Activated naive CD4-positive, alpha-beta T cell treated with anti-CD3 and anti-CD28 coated beads for 36 hours (primary cell): ENCODE measurements at regions of chr9 and their contacts with region 1.

Region 1: DNA sequence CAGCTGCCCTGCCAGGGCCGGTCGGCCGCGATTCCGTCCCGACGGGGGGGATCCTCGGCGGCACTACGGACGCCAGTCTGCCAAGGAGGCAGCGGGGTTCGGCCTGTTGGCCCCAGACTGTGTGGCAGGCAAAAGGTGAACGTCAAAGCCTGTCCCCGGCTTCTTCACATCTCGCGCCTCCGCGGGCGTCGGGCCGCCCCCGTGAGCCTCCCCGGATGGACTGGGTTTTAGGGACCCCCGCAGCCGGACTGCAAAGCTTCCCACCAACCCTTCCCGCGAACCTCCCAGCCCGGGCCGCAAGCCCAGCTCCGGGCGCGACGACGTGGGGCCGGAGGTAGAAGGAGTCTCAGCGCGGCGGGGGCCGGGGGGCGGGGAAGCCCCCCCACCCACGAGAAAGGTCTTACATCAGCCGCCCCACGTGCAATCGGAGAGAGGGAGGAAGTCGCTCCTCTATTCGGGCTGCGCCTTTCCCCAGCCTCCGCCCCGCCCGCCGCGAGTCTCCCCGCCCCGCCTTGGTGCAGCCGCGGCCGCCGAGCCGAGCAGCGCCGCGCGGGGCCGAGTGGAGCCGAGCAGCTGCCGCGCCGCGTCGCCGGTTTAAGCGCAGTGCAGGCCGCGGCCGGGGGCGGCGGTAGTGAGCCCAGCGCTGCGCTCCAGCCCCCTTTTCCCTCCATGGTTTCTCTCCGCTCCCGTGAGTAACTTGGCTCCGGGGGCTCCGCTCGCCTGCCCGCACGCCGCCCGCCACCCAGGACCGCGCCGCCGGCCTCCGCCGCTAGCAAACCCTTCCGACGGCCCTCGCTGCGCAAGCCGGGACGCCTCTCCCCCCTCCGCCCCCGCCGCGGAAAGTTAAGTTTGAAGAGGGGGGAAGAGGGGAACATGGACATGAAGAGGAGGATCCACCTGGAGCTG is at the start of gene ANP32B:
- DNase-seq: peak; percentile 96
- H3K4me3 Mint-ChIP-seq: peak within 1 kb of the TSS; percentile 82
- H3K27ac Mint-ChIP-seq: peak within 1 kb of the TSS; percentile 94
- H3K4me1 Mint-ChIP-seq: peaks cover 45% of the 10 kb centered on the region
- H3K27me3 Mint-ChIP-seq: no peaks in the 10 kb centered on the region
- total RNA-seq, gene ANP32B: 412 to 414 TPM

Region 2: DNA sequence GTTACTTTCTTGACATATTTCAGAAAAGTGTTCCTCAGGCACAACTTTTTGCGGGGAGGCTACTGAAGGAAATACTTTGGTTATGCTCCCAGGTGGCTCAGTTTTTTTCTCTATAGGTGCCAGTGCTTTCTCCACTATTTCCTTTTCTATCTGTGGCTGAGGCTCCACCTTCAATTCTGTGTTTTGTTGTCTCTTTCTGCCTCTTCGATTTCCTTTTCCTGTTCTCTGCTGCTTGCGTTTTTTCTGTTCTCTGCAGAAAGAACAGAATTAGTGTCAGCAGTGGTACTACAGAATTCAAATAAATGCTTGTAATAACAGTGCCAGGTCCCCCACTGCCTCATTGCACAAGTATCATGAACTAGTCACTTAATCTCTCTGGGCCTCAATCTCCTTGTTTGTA is 52.0 kb before region 1 on chr9:
- CTCF ChIA-PET with region 1: interaction called, 8 read pairs
- intact Hi-C with region 1: loop called (anchors 2 kb)
- DNase-seq: peak; percentile 21
- H3K4me3 Mint-ChIP-seq: peak overlapping the region; percentile 59
- H3K27ac Mint-ChIP-seq: peak overlapping the region; percentile 88
- H3K4me1 Mint-ChIP-seq: peaks cover 59% of the 10 kb centered on the region
- H3K27me3 Mint-ChIP-seq: no peaks in the 10 kb centered on the region

Region 3: DNA sequence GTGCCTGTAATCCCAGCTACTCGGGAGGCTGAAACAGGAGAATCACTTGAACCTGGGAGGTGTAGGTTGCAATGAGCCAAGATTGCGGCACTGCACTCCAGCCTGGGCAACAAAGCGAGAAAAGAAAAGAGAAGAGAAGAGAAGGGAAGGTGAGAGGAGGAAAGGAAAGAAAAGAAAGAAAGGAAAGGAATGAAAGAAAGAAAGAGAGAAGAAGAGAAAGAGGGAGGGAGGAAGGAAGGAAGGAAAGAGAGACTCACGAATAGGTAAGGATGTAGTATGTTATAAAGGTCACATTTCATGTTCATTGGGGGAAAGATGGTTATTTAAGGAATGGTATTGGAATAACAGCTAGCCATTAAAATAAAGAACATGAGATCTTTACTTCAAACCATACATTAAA is 10.2 kb before region 1 on chr9:
- CTCF ChIA-PET with region 1: interaction called, 3 read pairs
- intact Hi-C with region 1: loop called (anchors 1 kb)
- DNase-seq: no peak
- H3K4me3 Mint-ChIP-seq: no peak overlapping the region
- H3K27ac Mint-ChIP-seq: no peak overlapping the region
- H3K4me1 Mint-ChIP-seq: peaks cover 11% of the 10 kb centered on the region
- H3K27me3 Mint-ChIP-seq: no peaks in the 10 kb centered on the region

Region 4: DNA sequence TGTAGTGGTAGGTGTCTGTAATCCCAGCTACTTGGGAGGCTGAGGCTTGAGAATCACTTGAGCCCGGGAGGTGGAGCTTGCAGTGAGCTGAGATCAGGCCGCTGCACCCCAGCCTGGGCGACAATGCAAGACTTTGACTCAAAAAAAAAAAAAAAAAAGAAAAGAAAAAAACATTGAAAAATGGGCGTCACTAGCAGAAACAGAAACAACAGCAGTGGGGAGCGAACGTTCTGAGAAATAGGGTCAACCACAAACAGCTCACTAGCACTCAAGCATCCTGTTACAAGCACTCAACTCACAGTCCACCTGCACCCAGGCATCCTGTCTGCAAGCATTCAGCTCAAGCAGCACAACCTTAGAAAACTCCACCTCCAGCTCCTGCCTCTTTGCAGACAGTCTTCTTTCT is 118.9 kb after region 1 on chr9:
- CTCF ChIA-PET with region 1: no interaction called
- intact Hi-C with region 1: loop called (anchors 5 kb)
- DNase-seq: peak; percentile 90
- H3K4me3 Mint-ChIP-seq: peak overlapping the region; percentile 65
- H3K27ac Mint-ChIP-seq: peak overlapping the region; percentile 96
- H3K4me1 Mint-ChIP-seq: peaks cover 83% of the 10 kb centered on the region
- H3K27me3 Mint-ChIP-seq: no peaks in the 10 kb centered on the region

Region 5: DNA sequence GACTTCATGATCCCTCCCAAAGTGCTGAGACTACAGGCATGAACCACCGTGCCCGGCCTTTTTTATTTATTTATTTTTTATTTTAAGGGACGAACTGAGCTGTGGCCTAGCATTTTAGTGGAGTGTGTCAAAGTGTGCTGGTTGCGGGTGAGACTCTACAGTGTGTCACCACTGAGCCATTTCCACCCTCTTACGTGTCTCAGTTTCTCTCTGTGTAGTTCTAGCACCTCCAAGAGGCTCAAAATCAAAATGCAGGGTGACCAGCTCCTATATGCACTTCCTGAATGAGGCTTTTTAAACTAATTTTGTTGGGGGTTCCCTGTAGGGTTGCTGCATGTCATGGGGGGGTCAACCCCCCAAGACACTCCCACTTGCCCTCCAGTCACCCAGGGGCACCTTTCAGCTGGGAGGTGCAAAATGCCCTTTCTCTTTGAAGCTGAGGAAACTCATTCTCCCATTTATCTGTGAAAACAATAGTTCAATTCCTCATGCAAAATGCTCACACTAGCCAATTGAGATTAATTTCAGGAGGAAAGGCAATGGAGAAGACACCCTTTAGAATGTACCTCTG is 1030.1 kb after region 1 on chr9:
- CTCF ChIA-PET with region 1: no interaction called
- intact Hi-C with region 1: loop called (anchors 5 kb)
- DNase-seq: peak; percentile 26
- H3K4me3 Mint-ChIP-seq: no peak overlapping the region
- H3K27ac Mint-ChIP-seq: peak overlapping the region; percentile 72
- H3K4me1 Mint-ChIP-seq: peaks cover 20% of the 10 kb centered on the region
- H3K27me3 Mint-ChIP-seq: no peaks in the 10 kb centered on the region